Activated CD4-positive, alpha-beta T cell treated with anti-CD3 and anti-CD28 coated beads, Interleukin-2, amount 10 ng/mL, durations not matched to agents 7 days and 5 days (primary cell): ENCODE measurements at regions of chr1 and their contacts with region 1.

Region 1: GRCh38 chr1:45339789-45340570 is at the starts of genes MUTYH and TOE1:
- DNase-seq: peak; percentile 95
- H3K4me3 Mint-ChIP-seq: peak within 1 kb of the TSS; percentile 97
- H3K27ac Mint-ChIP-seq: peak within 1 kb of the TSS; percentile 98
- H3K4me1 Mint-ChIP-seq: peaks cover 55% of the 10 kb centered on the region
- H3K27me3 Mint-ChIP-seq: no peaks in the 10 kb centered on the region
- total RNA-seq, gene MUTYH: 51.7 to 55.1 TPM
- total RNA-seq, gene TOE1: 22.6 to 34.4 TPM

Region 2: DNA sequence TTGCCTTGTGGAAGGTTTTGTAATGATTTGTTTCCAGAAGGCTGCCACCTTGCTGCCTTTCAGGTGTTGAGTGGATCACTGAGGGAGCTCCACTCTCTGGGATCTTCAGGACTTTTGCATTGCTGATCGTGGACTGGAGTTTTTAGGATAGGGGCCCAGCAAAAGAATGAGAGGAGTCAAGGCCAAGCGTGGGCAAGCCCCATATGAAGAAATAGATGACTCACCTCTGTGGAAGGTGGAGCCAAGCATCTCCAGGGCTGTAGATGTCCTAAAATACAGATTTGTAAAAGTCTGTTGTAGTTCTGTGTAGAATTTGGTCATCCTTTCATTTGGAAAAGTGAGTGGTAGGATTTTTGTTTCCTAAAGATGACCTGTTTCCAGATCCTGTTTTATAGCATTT is 1565.6 kb before region 1 on chr1:
- CTCF ChIA-PET with region 1: no interaction called
- POLR2A ChIA-PET with region 1: interaction called, 10 read pairs
- DNase-seq: no peak
- H3K4me3 Mint-ChIP-seq: no peak overlapping the region
- H3K27ac Mint-ChIP-seq: no peak overlapping the region
- H3K4me1 Mint-ChIP-seq: peaks cover 6% of the 10 kb centered on the region
- H3K27me3 Mint-ChIP-seq: no peaks in the 10 kb centered on the region

Region 3: GRCh38 chr1:45326627-45327623 is 13.1 kb before region 1 on chr1 and contains the start of gene HPDL:
- CTCF ChIA-PET with region 1: interaction called, 6 read pairs
- POLR2A ChIA-PET with region 1: interaction called, 22 read pairs
- DNase-seq: peak; percentile 61
- H3K4me3 Mint-ChIP-seq: peak within 1 kb of the TSS; percentile 77
- H3K27ac Mint-ChIP-seq: peak within 1 kb of the TSS; percentile 87
- H3K4me1 Mint-ChIP-seq: peaks cover 23% of the 10 kb centered on the region
- H3K27me3 Mint-ChIP-seq: no peaks in the 10 kb centered on the region
- total RNA-seq, gene HPDL: 6.2 to 6.5 TPM

Region 4: DNA sequence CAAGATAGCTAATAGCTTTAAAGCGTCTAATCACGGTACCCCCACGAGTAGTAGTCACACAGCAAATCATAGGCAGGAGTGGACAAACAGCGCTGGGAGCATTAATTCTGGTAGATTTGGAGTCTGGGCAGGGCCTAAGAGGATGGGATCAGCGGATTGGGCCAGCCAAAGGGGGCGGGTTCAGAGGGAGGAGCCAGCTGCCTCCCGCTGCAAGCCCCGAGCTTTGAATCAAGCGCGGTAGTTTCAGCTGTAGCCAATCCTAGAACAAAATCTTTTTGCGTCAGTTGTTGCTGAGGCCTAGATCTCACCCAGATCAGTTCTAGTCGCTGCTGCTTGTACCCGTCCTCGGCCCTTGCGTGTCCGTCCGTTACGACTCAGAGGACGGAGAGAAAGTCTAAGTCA is 243.3 kb after region 1 on chr1:
- CTCF ChIA-PET with region 1: no interaction called
- POLR2A ChIA-PET with region 1: no interaction called
- DNase-seq: peak; percentile 97
- H3K4me3 Mint-ChIP-seq: peak overlapping the region; percentile 93
- H3K27ac Mint-ChIP-seq: peak overlapping the region; percentile 99
- H3K4me1 Mint-ChIP-seq: peaks cover 30% of the 10 kb centered on the region
- H3K27me3 Mint-ChIP-seq: no peaks in the 10 kb centered on the region